IMR-90 (cell line): ENCODE measurements at regions of chr4 and their contacts with region 1.

Region 1: DNA sequence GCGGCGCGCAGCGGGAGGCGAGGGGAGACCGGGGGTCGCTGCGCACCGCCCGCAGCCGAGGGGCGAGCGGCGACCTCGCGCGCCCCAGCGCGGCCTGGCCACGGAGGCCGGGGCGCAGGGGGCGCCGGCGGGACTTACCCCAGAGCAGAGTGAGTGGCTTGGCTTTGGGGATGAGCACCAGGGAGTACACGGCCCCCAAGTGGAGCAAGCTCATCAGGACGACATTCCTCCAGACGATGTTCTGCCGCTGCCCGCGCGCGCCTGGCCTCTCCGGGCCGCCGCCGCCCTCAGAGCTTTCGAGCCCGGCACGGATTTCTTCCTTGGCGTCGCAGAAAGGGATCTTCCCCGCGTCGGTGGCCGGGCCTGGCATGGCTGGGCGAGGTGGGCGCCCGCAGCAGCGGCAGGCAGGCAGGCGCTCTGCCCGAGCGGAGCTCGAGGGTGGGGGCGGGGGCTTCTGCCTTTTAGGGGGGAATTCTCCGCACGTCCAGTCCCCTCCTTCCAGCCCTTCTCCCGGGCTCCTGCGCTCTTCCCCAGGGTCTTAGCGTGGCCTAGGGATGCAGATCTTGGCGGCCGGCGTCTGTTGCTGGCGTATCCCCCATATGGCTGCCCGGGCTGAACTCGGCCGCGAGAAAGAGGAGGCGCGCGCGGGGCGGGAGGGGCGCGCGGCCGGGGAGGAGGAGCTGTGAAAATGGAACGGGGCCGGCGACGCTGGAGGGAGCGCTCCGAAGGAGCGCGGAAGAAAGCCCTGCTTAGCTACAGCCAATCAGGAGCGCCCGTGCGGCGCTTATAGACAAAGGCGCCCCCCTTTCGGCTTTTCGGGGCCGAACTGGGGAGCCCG is at the start of gene SCD5:
- DNase-seq: peak; percentile 82
- ATAC-seq: peak; percentile 96
- H3K4me3 ChIP-seq: peak within 1 kb of the TSS; percentile 92
- H3K27ac ChIP-seq: peak within 1 kb of the TSS; percentile 27; the same call in 1 of the 2 replicates
- H3K4me1 ChIP-seq: peaks cover 10% of the 10 kb centered on the region
- H3K27me3 ChIP-seq: no peaks in the 10 kb centered on the region
- CTCF ChIP-seq: no peak
- POLR2A ChIP-seq: no peak
- RAD21 ChIP-seq: no peak
- total RNA-seq, gene SCD5: 12.4 and 17.2 TPM in 2 replicates

Region 2: GRCh38 chr4:82104578-82104977 is 693.8 kb before region 1 on chr4:
- CTCF ChIA-PET with region 1: no interaction called
- POLR2A ChIA-PET with region 1: no interaction called
- dilution Hi-C with region 1: no loop called
- in situ Hi-C with region 1: no loop called
- intact Hi-C with region 1: no loop called
- DNase-seq: no peak
- ATAC-seq: no peak
- H3K4me3 ChIP-seq: no peak overlapping the region
- H3K27ac ChIP-seq: no peak overlapping the region
- H3K4me1 ChIP-seq: no peaks in the 10 kb centered on the region
- H3K27me3 ChIP-seq: no peaks in the 10 kb centered on the region
- CTCF ChIP-seq: no peak
- POLR2A ChIP-seq: no peak
- RAD21 ChIP-seq: no peak

Region 3: DNA sequence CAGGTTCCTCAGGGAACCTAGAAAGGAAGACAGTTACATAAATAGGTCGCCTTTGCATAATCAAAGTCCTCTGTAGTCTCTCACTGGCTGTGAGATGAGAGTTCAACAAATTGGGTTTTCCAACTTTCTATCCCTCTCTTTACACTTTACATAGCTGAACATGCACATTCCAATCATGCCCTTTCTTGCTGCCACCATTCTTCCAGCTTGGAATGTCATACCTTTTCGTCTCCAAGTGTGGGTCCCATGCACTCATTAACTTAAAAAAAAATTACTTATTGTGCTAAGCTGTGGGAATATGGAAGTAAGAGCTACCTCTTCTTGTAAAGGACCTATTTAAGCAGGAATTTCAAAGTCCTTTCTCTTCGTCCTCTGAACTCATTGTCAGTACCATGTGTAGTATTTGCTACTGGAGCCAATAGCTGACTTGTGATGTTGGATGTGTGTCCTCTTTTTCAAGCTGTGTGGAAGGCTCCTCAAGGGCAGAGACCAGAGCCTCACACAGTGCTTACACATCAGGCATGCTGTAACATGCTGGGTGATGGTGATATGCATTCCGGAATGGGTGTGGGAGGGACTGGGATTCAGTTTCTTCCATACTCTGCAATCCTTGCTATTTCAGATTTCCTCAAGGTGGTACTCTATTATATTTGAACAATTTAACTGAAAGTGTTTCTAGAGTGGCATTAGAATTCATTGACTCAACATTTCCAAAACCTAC is 360.9 kb before region 1 on chr4:
- CTCF ChIA-PET with region 1: no interaction called
- POLR2A ChIA-PET with region 1: no interaction called
- dilution Hi-C with region 1: no loop called
- in situ Hi-C with region 1: no loop called
- intact Hi-C with region 1: no loop called
- DNase-seq: peak; percentile 44
- ATAC-seq: peak; percentile 89
- H3K4me3 ChIP-seq: no peak overlapping the region
- H3K27ac ChIP-seq: no peak overlapping the region
- H3K4me1 ChIP-seq: peaks cover 3% of the 10 kb centered on the region
- H3K27me3 ChIP-seq: no peaks in the 10 kb centered on the region
- CTCF ChIP-seq: no peak
- POLR2A ChIP-seq: no peak
- RAD21 ChIP-seq: no peak

Region 4: GRCh38 chr4:82721819-82722423 is 76.5 kb before region 1 on chr4:
- CTCF ChIA-PET with region 1: interaction called, 5 read pairs
- POLR2A ChIA-PET with region 1: no interaction called
- dilution Hi-C with region 1: no loop called
- in situ Hi-C with region 1: no loop called
- intact Hi-C with region 1: loop called (anchors 5 kb)
- DNase-seq: peak; percentile 26
- ATAC-seq: peak; percentile 80
- H3K4me3 ChIP-seq: no peak overlapping the region
- H3K27ac ChIP-seq: no peak overlapping the region
- H3K4me1 ChIP-seq: no peaks in the 10 kb centered on the region
- H3K27me3 ChIP-seq: no peaks in the 10 kb centered on the region
- CTCF ChIP-seq: peak; percentile 35
- POLR2A ChIP-seq: no peak
- RAD21 ChIP-seq: peak; percentile 51

Region 5: DNA sequence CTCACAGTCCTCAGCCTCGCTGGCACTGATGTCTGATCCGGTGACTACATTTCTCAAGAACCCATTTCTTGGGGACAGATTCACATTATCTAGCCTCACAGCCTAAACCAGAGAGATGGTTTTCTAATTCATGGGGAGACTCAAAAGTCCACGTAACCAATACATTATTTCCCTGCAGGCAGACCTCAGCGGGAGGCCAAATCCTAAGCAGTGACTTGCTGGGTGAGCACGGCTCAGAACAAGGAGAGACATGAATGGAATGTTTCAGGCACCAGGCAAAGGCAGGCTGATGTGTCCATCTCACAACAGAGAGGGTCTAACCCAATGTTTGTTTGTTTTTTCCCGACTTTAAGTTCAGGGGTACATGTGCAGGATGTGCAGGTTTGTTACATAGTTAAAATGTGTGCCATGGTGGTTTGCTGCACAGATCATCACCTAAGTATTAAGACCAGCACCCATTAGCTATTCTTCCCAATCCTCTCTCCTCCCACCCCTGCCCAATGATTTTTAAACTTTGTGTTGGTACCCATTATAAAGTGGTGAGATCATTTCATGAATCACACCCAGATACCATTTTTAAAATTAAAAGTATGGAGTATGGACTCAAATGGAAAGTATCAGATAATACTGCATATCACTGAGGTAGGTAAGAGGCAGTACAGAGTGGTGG is 53.1 kb before region 1 on chr4:
- CTCF ChIA-PET with region 1: no interaction called
- POLR2A ChIA-PET with region 1: no interaction called
- dilution Hi-C with region 1: no loop called
- in situ Hi-C with region 1: no loop called
- intact Hi-C with region 1: loop called (anchors 5 kb)
- DNase-seq: peak; percentile 77
- ATAC-seq: peak; percentile 87
- H3K4me3 ChIP-seq: no peak overlapping the region
- H3K27ac ChIP-seq: no peak overlapping the region; the same call in 1 of the 2 replicates
- H3K4me1 ChIP-seq: peaks cover 8% of the 10 kb centered on the region
- H3K27me3 ChIP-seq: no peaks in the 10 kb centered on the region
- CTCF ChIP-seq: no peak
- POLR2A ChIP-seq: no peak
- RAD21 ChIP-seq: no peak

Region 6: GRCh38 chr4:82787342-82787741 is 11.0 kb before region 1 on chr4:
- CTCF ChIA-PET with region 1: interaction called, 3 read pairs
- POLR2A ChIA-PET with region 1: interaction called, 10 read pairs
- dilution Hi-C with region 1: no loop called
- in situ Hi-C with region 1: no loop called
- intact Hi-C with region 1: no loop called
- DNase-seq: no peak
- ATAC-seq: no peak
- H3K4me3 ChIP-seq: no peak overlapping the region
- H3K27ac ChIP-seq: no peak overlapping the region
- H3K4me1 ChIP-seq: peaks cover 9% of the 10 kb centered on the region
- H3K27me3 ChIP-seq: no peaks in the 10 kb centered on the region
- CTCF ChIP-seq: no peak
- POLR2A ChIP-seq: no peak
- RAD21 ChIP-seq: no peak